H1 (cell line): ENCODE measurements at regions of chr5 and their contacts with region 1.

Region 1: GRCh38 chr5:150227606-150228273 is 37.9 kb downstream of the SLC6A7 start:
- DNase-seq: no peak
- H3K4me3 ChIP-seq: no peak overlapping the region
- H3K27ac ChIP-seq: no peak overlapping the region
- H3K4me1 ChIP-seq: peaks cover 0 to 4% (median 0%) of the 10 kb centered on the region in 4 experiments; a peak in 1 of 7 replicates
- H3K27me3 ChIP-seq: no peaks in the 10 kb centered on the region
- CTCF ChIP-seq: no peak
- EP300 ChIP-seq: no peak
- POLR2A ChIP-seq: no peak
- RAD21 ChIP-seq: no peak

Region 2: DNA sequence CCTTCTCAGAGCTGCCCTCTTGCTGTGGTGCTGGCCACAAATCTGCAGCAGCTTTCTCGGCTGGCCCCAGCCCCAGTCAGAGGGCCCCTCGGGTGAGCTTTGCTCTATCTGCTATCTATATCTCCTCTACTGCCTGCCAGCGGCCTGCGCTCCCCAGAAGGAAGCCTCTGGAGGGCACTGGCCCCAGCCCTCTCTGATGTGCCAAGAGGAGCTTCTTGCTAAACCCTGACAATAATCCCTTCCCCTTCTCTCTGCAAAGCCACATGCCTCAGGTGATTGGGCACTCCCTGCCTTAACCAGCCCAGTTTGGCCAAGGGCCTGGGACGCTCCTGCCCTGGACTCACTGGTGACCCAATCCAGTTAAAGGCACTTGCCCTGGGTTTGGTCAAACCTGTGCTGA is 19.1 kb after region 1 on chr5:
- CTCF ChIA-PET with region 1: interaction called, 10 read pairs
- POLR2A ChIA-PET with region 1: no interaction called
- DNase-seq: no peak
- H3K4me3 ChIP-seq: no peak overlapping the region
- H3K27ac ChIP-seq: no peak overlapping the region
- H3K4me1 ChIP-seq: 0 out of 7 replicates have a peak, but pooled peaks cover 0 to 2% (median 0%) of the 10 kb centered on the region in 4 experiments
- H3K27me3 ChIP-seq: no peaks in the 10 kb centered on the region
- CTCF ChIP-seq: no peak
- EP300 ChIP-seq: no peak
- POLR2A ChIP-seq: no peak
- RAD21 ChIP-seq: no peak